ENCODE measurements at regions of chr5 and their contacts with region 1.

Region 1: GRCh38 chr5:179907570-179908324 is at the start of gene TBC1D9B:
- DNase-seq: peak; percentile 57 to 77 (median 73)
- H3K4me3 ChIP-seq: peak within 1 kb of the TSS; percentile 42 to 80 (median 56)
- H3K4me3 Mint-ChIP-seq: peak within 1 kb of the TSS; percentile 91 to 95
- H3K27ac ChIP-seq: peak within 1 kb of the TSS; percentile 68 to 86
- H3K27ac Mint-ChIP-seq: peak within 1 kb of the TSS; percentile 85 to 96 (median 90)
- H3K4me1 ChIP-seq: peaks cover 29 to 44% of the 10 kb centered on the region in 2 donors
- H3K4me1 Mint-ChIP-seq: peaks cover 39% of the 10 kb centered on the region
- H3K27me3 ChIP-seq: no peaks in the 10 kb centered on the region
- H3K27me3 Mint-ChIP-seq: no peaks in the 10 kb centered on the region
- CTCF ChIP-seq: no peak
- polyA plus RNA-seq, gene TBC1D9B: 13.4 to 116 (median 26.3) TPM

Region 2: GRCh38 chr5:179836225-179837019 is 71.3 kb before region 1 on chr5:
- intact Hi-C with region 1: loop called in 1 of 2 experiments (anchors 10 kb)
- DNase-seq: peak; percentile 57 to 62 (median 57)
- H3K4me3 ChIP-seq: no peak overlapping the region
- H3K4me3 Mint-ChIP-seq: no peak overlapping the region
- H3K27ac ChIP-seq: peak overlapping the region in 1 of 2 donors; percentile 43
- H3K27ac Mint-ChIP-seq: peak overlapping the region; percentile 53 to 81 (median 69)
- H3K4me1 ChIP-seq: peaks cover 0 to 9% of the 10 kb centered on the region in 2 donors
- H3K4me1 Mint-ChIP-seq: peaks cover 13% of the 10 kb centered on the region
- H3K27me3 ChIP-seq: no peaks in the 10 kb centered on the region
- H3K27me3 Mint-ChIP-seq: peaks cover 0 to 2% (median 0%) of the 10 kb centered on the region in 3 donors
- CTCF ChIP-seq: no peak

Measured in CD14-positive monocyte (primary cell).